Ovary (tissue), 10 donors: ENCODE measurements at regions of chr21 and their contacts with region 1.

Region 1: DNA sequence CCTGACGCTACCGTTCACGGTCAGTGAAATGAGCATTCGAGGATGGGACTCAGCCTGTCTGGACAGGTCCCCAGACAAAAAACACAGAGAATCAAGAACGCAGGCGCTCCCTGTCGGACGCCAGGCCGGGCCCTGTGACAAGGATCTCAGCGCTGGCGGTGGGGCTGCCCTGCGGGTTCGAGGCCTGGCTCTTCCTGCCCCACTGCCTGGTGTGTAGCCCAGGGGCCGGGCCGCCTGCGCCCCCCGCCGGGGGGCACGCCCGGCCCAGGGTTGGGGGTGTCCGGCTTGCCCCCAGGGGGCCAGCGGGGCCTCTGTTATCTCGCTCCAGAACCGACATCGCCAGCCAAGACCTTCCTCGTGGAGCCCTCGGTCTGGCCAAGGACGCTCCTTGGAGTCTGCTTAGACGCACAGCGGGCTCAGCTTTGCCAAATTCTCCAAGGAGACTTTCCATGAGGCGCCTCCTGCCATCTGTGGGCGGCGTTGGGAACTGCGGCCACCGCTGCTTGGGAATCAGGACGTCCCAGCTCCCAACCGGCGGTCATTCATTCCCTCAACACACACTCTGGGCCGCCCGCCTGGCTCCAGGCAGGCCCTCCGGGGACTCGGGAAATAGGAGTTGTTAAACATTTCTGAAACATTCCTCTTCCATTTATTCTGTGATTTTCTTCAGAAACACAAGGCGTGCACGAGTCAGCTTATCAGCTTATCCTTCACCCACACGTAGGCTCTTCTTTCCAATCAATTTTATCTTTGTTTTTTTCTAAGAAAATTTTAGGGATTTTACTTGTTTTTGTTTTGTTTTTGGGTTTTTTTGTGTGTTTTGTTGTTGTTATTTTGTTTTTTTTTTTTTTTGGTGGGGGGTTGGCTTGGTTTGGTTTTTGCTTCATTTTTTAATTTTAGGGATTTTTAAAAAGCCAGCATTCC is 11.4 kb upstream of the RIPK4 start:
- DNase-seq: peak; percentile 83 to 88 (median 83)
- H3K4me3 ChIP-seq: no peak overlapping the region
- H3K27ac ChIP-seq: no peak overlapping the region
- H3K4me1 ChIP-seq: no peaks in the 10 kb centered on the region
- H3K27me3 ChIP-seq: no peaks in the 10 kb centered on the region
- CTCF ChIP-seq: peak; percentile 65 to 84 (median 75)
- EP300 ChIP-seq: no peak
- POLR2A ChIP-seq: no peak

Region 2: DNA sequence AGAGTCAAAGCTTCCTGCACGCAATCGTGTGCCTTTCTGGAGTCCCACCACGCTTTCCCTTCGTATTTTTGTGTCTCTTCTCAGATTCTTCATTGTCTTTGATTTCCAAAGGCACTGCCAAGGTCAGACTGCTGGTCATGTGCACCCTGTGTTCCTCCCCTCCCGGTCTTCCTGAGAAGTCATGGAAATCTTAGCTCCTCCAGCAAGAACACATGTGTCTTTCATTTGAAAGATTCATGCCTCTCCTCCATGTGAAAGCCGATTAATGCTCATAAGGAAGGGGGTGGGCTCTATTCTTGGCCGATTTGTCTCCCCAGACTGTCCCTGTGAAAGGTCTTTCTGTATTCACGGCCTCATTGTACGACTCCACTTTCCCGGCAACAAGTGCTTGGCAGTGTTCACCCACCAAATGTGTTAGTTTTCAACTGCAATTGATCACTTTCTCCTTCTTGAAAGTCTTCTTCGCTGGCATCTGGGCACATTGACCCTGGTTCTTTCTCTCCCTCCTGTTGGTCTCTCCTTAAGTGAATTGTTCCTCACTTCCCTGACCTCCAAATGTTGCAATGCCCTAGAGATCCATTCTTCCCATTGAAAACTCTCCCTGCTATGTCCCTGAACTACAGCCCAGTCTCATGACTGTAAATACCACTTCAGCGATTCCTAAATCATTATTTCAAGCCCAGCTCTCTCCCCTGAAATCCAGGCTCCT is 391.0 kb before region 1 on chr21:
- intact Hi-C with region 1: loop called in 1 of 4 experiments (anchors 10 kb)
- DNase-seq: no peak
- H3K4me3 ChIP-seq: no peak overlapping the region
- H3K27ac ChIP-seq: no peak overlapping the region
- H3K4me1 ChIP-seq: no peaks in the 10 kb centered on the region
- H3K27me3 ChIP-seq: no peaks in the 10 kb centered on the region
- CTCF ChIP-seq: no peak
- EP300 ChIP-seq: no peak
- POLR2A ChIP-seq: no peak

Region 3: GRCh38 chr21:41612674-41613532 is 165.3 kb before region 1 on chr21:
- intact Hi-C with region 1: loop called in 3 of 4 experiments (anchors 2 to 10 kb)
- DNase-seq: peak; percentile 74 to 88 (median 79)
- H3K4me3 ChIP-seq: no peak overlapping the region
- H3K27ac ChIP-seq: peak overlapping the region; percentile 2 to 22
- H3K4me1 ChIP-seq: peaks cover 1% of the 10 kb centered on the region
- H3K27me3 ChIP-seq: no peaks in the 10 kb centered on the region
- CTCF ChIP-seq: peak; percentile 48 to 81 (median 60)
- EP300 ChIP-seq: no peak
- POLR2A ChIP-seq: no peak

Region 4: GRCh38 chr21:41622831-41623548 is 155.2 kb before region 1 on chr21:
- intact Hi-C with region 1: loop called in 2 of 4 experiments (anchors 5 to 10 kb)
- DNase-seq: no peak
- H3K4me3 ChIP-seq: no peak overlapping the region
- H3K27ac ChIP-seq: no peak overlapping the region
- H3K4me1 ChIP-seq: no peaks in the 10 kb centered on the region
- H3K27me3 ChIP-seq: no peaks in the 10 kb centered on the region
- CTCF ChIP-seq: no peak
- EP300 ChIP-seq: no peak
- POLR2A ChIP-seq: no peak

Region 5: DNA sequence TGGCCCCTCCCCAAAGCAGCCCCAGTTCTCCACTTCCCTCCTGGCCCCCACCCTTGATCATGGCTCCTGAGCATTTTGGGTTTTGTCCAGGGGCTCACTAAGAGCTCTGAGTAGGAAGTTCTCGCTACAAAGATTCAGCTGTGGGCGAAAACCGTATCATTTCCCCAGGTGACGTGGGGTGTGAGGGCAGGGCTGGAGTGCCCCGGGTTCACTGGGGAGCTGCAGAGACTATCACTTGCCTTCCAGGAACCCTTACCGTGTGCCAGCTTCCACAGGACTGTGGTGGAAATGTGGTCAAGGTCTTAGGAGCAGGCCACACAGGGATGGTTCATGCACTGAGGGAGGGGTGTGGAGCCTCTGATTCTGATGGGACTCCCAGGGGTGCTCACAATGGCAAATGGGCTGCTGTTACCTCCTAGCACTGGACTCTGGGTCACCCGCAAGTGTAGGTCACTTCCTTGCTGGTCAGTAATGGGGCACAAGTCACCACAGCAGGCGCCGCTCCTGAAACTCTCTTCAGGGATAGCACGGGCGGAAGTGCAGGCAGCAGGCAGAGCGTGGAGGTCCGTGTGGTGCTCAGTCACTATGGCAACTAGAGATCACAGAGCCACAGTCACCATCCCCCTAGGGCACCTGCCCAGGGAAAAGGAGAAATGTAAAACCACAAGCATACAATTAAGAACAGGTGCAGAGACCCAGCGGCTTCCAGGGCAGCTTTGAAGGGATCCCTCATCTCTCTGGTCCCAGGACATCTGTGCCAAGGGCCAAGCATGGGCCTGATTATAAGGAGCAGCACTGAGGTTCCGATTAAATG is 682.4 kb after region 1 on chr21:
- intact Hi-C with region 1: no loop called
- DNase-seq: no peak
- H3K4me3 ChIP-seq: no peak overlapping the region
- H3K27ac ChIP-seq: no peak overlapping the region
- H3K4me1 ChIP-seq: no peaks in the 10 kb centered on the region
- H3K27me3 ChIP-seq: no peaks in the 10 kb centered on the region
- CTCF ChIP-seq: no peak
- EP300 ChIP-seq: no peak
- POLR2A ChIP-seq: no peak